IMR-90 (cell line): ENCODE measurements at regions of chr11 and their contacts with region 1.

Region 1: DNA sequence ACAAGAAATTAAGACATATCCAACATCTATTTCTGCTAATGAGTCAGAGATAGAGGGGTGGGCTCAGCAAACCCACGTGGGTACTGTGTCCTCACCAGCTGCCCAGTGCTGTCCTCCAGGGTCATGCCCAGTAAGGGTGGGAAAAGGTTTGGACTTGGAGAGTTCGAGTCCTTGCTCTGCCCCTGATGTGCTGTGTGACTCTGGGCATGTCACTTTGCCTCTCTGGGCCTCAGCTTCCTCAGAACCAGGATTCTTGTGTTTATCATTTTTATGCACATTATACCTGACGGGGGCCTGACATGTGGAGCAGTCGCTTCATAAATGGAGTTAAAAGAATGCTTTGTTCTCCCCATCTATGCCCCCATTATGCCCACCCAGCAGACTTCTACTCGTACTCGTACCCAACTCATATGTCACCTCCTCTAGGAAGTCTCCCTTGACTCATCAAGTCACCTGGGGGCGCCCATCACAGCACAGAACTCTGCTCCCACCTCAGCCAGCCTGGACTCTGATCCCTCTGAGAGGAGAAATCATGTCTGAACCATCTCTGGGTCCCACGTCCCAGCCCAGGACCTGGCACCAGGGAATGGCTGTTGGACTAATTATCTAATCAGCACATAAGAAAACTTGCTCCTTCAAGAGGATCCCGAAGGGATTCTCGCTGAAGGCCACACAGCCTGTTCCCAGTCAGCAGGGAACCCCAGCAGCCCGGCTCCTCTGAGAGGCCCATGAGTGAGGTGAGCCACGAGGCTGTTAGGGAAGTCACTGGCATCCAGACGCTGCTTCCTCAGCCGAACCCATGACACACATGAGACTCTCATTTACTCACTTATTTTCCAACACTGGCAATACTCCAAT is 38.7 kb upstream of the TSKU start:
- DNase-seq: peak; percentile 36
- ATAC-seq: no peak
- H3K4me3 ChIP-seq: no peak overlapping the region
- H3K27ac ChIP-seq: no peak overlapping the region
- H3K4me1 ChIP-seq: no peaks in the 10 kb centered on the region; the same call in 1 of the 2 replicates
- H3K27me3 ChIP-seq: peaks cover 42% of the 10 kb centered on the region
- CTCF ChIP-seq: no peak
- POLR2A ChIP-seq: no peak
- RAD21 ChIP-seq: no peak

Region 2: DNA sequence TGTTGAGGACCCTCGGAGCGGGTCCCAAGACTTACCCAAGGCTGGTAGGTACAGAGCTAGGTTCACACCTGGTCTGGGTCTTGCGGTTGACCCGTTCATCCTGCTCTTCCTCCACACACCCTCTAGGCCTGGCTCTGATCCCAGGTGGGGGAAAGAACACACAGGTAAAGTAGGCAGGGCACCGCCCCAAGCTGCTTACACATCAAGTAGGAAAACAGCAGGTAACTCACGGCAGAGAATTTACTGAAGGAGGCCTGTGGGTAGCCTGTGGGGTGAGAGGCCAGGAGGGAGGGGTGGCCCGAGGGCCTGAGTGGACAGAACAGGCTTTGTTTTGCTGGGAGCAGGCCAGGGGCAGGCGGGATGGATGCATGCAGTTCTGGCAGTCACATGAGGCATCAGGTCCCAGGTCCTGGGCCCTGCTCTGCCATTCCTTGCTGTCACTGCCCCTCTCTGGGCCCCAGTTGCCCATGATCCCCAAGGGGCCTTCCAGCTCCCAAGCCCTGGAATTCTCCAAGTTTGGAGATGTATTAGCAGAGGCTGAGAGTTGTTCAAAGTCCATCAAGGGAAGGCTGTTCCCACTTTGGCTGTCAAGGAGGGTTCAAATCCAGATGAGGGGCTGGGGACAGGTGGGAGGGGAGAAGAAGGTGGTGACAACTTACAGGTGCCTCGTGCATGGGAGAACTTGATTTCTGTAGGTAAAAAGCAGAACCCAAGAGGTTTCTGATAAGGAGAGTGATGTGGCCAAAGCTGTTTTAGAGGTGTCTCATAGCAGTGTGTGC is 44.4 kb after region 1 on chr11:
- CTCF ChIA-PET with region 1: no interaction called
- POLR2A ChIA-PET with region 1: no interaction called
- dilution Hi-C with region 1: no loop called
- in situ Hi-C with region 1: loop called (anchors 5 kb)
- intact Hi-C with region 1: no loop called
- DNase-seq: no peak
- ATAC-seq: no peak
- H3K4me3 ChIP-seq: no peak overlapping the region
- H3K27ac ChIP-seq: no peak overlapping the region
- H3K4me1 ChIP-seq: peaks cover 14% of the 10 kb centered on the region; the same call in 1 of the 2 replicates
- H3K27me3 ChIP-seq: no peaks in the 10 kb centered on the region
- CTCF ChIP-seq: no peak
- POLR2A ChIP-seq: no peak
- RAD21 ChIP-seq: no peak